ENCODE measurements at regions of chr5 and their contacts with region 1.

Region 1: GRCh38 chr5:14644623-14645237 is 19.8 kb upstream of the OTULIN start:
- DNase-seq: no peak
- H3K4me3 Mint-ChIP-seq: no peak overlapping the region
- H3K27ac Mint-ChIP-seq: no peak overlapping the region
- H3K4me1 Mint-ChIP-seq: no peaks in the 10 kb centered on the region
- H3K27me3 Mint-ChIP-seq: peaks cover 17% of the 10 kb centered on the region

Region 2: DNA sequence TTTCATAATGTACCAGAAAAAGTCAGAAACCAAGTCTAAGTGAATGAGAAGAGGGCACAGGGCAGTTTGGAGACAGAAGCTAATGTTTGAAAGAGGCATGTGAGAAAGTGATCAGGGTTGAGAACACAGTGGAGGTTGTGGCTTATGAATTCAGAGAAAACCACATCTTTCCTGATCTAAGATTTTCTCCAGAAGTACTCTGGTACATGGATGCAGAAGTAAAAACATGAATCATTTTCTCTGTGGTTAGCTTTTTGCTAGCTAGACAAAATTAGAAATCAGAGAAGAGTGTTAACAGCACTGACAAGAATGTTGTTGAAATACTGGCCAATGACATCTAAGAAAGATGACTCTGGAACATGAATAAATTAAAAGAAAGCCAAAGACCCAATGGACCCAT is 1241.4 kb before region 1 on chr5:
- intact Hi-C with region 1: no loop called
- DNase-seq: no peak
- H3K4me3 Mint-ChIP-seq: no peak overlapping the region
- H3K27ac Mint-ChIP-seq: no peak overlapping the region
- H3K4me1 Mint-ChIP-seq: no peaks in the 10 kb centered on the region
- H3K27me3 Mint-ChIP-seq: no peaks in the 10 kb centered on the region

Region 3: GRCh38 chr5:14399054-14399692 is 245.6 kb before region 1 on chr5:
- intact Hi-C with region 1: loop called (anchors 1 kb)
- DNase-seq: no peak
- H3K4me3 Mint-ChIP-seq: no peak overlapping the region
- H3K27ac Mint-ChIP-seq: no peak overlapping the region
- H3K4me1 Mint-ChIP-seq: peaks cover 13% of the 10 kb centered on the region
- H3K27me3 Mint-ChIP-seq: peaks cover 1% of the 10 kb centered on the region